Activated naive CD4-positive, alpha-beta T cell treated with anti-CD3 and anti-CD28 coated beads for 36 hours (primary cell): ENCODE measurements at regions of chr7 and their contacts with region 1.

Region 1: GRCh38 chr7:26167301-26167934 is 15.4 kb downstream of the NFE2L3 start:
- DNase-seq: peak; percentile 79
- H3K4me3 Mint-ChIP-seq: peak overlapping the region; percentile 23
- H3K27ac Mint-ChIP-seq: peak overlapping the region; percentile 94
- H3K4me1 Mint-ChIP-seq: peaks cover 40% of the 10 kb centered on the region
- H3K27me3 Mint-ChIP-seq: no peaks in the 10 kb centered on the region

Region 2: DNA sequence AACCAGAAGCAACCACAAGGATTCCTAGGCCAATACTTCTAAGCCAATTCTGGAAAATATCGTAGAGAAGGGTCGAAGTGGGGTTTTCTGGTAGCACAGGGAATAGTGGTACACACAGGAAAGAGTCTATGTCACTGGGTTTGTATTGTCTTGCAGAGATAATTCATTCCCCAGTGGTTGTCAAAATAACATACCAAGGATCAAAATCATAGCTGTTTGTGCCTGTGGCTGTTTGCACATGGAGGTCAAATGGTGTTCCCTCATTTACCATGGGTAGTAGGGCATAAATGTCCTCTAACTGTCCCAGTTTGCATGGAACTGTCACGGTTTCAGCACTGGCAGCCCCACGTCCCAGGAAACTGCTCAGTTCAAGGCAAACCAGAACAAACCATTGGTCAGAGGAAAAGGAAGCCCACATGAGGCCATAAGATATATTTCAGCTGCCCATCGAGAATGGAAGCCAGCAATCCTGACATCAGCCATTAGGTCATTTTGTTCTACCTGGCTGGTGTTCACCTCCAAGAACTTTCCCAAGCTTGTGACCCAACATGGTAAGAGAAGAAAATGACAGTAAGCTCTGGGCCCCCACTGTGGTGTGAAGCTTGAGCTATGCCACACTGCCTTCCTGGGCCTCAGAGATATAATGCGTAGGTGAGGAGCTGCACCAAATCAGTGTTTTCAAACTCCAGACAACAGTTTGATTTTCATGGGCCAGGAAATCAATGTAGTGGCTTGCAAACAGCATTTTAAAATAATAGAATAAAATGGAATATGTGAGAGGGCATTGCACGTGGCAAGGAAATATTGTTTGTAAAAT is 69.4 kb before region 1 on chr7:
- CTCF ChIA-PET with region 1: interaction called, 23 read pairs
- intact Hi-C with region 1: loop called (anchors 2 kb)
- DNase-seq: no peak
- H3K4me3 Mint-ChIP-seq: peak overlapping the region; percentile 57
- H3K27ac Mint-ChIP-seq: peak overlapping the region; percentile 91
- H3K4me1 Mint-ChIP-seq: peaks cover 53% of the 10 kb centered on the region
- H3K27me3 Mint-ChIP-seq: no peaks in the 10 kb centered on the region

Region 3: GRCh38 chr7:26187380-26188205 is 20.2 kb after region 1 on chr7:
- CTCF ChIA-PET with region 1: interaction called, 3 read pairs
- intact Hi-C with region 1: loop called (anchors 1 kb)
- DNase-seq: peak; percentile 47
- H3K4me3 Mint-ChIP-seq: no peak overlapping the region
- H3K27ac Mint-ChIP-seq: peak overlapping the region; percentile 85
- H3K4me1 Mint-ChIP-seq: peaks cover 75% of the 10 kb centered on the region
- H3K27me3 Mint-ChIP-seq: no peaks in the 10 kb centered on the region